CD4-positive, alpha-beta T cell (primary cell): ENCODE measurements at regions of chr22 and their contacts with region 1.

Region 1: DNA sequence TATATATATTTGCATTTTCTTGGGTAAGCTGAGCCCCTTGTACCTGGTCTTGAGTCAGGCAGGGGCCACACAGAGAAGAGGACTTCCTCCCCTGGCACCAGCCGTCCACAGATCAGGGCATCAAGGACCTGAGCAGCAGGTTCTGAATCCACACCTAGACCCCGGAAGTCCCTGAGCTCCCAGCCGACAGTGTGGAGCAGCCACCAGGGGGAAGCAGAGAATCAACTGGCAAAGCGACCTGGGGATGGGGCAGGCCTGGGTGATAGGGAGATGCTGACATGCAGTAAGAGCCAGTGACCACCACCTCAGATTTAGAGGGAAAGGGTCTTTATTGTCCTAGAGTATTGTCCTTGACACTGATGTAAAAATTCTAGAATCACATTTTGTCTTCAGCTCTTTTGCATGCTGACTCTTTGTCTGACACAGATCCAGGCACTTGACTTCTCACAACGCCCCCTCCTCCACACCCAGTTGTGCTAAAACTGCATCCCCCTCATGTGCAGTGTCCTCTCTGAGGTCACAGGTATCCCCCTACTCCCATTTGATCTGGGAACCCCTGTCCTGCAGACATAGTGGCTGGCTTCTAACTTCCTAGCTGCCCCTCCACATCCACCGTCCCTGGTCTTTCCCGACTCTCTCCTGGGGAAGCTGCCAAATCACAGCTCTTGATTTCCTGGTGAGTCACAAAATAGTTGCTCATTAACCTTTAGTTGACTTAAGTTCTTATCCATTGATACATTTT is 109.3 kb downstream of the GGTLC2 start:
- DNase-seq: peak; percentile 67 to 89 (median 75)
- ATAC-seq: peak; percentile 92
- H3K4me3 ChIP-seq: no peak overlapping the region
- H3K4me3 Mint-ChIP-seq: peak overlapping the region; percentile 62
- H3K27ac ChIP-seq: peak overlapping the region in 1 of 2 donors; percentile 46
- H3K27ac Mint-ChIP-seq: peak overlapping the region; percentile 91
- H3K4me1 ChIP-seq: peaks cover 55% of the 10 kb centered on the region
- H3K4me1 Mint-ChIP-seq: peaks cover 43% of the 10 kb centered on the region
- H3K27me3 ChIP-seq: no peaks in the 10 kb centered on the region
- H3K27me3 Mint-ChIP-seq: no peaks in the 10 kb centered on the region
- CTCF ChIP-seq: peak; percentile 77

Region 2: DNA sequence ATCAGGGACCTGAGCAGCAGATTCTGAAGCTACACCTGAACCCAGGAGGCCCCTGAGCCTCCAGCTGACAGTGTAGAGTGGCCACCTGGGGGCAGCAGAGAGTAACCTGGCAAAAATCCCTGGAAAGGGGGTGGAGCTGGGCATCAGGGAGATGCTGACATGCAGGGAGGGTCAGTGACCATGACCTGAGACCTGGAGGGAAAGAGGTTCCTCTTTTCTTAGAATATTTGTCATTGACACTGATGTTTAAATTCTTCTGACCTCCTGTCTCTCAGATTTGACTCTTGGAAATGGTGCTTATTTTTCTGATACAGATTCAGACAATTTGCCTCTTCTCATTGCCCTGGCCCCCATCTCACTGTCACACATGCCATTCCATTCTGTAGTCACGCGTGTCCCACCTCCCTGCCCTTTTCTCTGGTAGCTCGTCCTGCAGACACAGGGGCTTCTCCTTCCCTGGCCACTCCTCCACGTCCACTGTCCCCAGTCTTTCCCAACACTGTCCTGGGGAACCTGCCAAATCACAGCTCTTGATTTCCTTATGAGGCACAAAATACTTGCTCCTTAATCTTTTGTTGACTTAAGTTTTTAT is 16.7 kb after region 1 on chr22:
- CTCF ChIA-PET with region 1: interaction called, 14 read pairs
- POLR2A ChIA-PET with region 1: interaction called, 8 read pairs
- intact Hi-C with region 1: loop called in 1 of 2 experiments (anchors 2 kb)
- DNase-seq: peak in 12 of 14 experiments; percentile 19 to 69 (median 36)
- ATAC-seq: peak; percentile 54
- H3K4me3 ChIP-seq: no peak overlapping the region
- H3K4me3 Mint-ChIP-seq: no peak overlapping the region
- H3K27ac ChIP-seq: no peak overlapping the region
- H3K27ac Mint-ChIP-seq: no peak overlapping the region
- H3K4me1 ChIP-seq: peaks cover 21% of the 10 kb centered on the region
- H3K4me1 Mint-ChIP-seq: no peaks in the 10 kb centered on the region
- H3K27me3 ChIP-seq: no peaks in the 10 kb centered on the region
- H3K27me3 Mint-ChIP-seq: peaks cover 12% of the 10 kb centered on the region
- CTCF ChIP-seq: peak; percentile 75

Region 3: GRCh38 chr22:22802339-22802970 is 48.8 kb after region 1 on chr22:
- CTCF ChIA-PET with region 1: interaction called, 6 read pairs
- POLR2A ChIA-PET with region 1: interaction called, 9 read pairs
- intact Hi-C with region 1: loop called in 1 of 2 experiments (anchors 2 kb)
- DNase-seq: peak in 10 of 14 experiments; percentile 38 to 81 (median 57)
- ATAC-seq: peak; percentile 72
- H3K4me3 ChIP-seq: no peak overlapping the region
- H3K4me3 Mint-ChIP-seq: no peak overlapping the region
- H3K27ac ChIP-seq: no peak overlapping the region
- H3K27ac Mint-ChIP-seq: no peak overlapping the region
- H3K4me1 ChIP-seq: peaks cover 25% of the 10 kb centered on the region
- H3K4me1 Mint-ChIP-seq: peaks cover 55% of the 10 kb centered on the region
- H3K27me3 ChIP-seq: peaks cover 0 to 2% of the 10 kb centered on the region in 2 experiments
- H3K27me3 Mint-ChIP-seq: no peaks in the 10 kb centered on the region
- CTCF ChIP-seq: peak; percentile 83

Region 4: GRCh38 chr22:22870577-22871404 is 117.1 kb after region 1 on chr22:
- CTCF ChIA-PET with region 1: interaction called, 14 read pairs
- POLR2A ChIA-PET with region 1: interaction called, 3 read pairs
- intact Hi-C with region 1: no loop called
- DNase-seq: peak in 1 of 14 experiments; percentile 24
- ATAC-seq: no peak
- H3K4me3 ChIP-seq: no peak overlapping the region
- H3K4me3 Mint-ChIP-seq: no peak overlapping the region
- H3K27ac ChIP-seq: no peak overlapping the region
- H3K27ac Mint-ChIP-seq: no peak overlapping the region
- H3K4me1 ChIP-seq: peaks cover 13% of the 10 kb centered on the region
- H3K4me1 Mint-ChIP-seq: peaks cover 11% of the 10 kb centered on the region
- H3K27me3 ChIP-seq: no peaks in the 10 kb centered on the region
- H3K27me3 Mint-ChIP-seq: no peaks in the 10 kb centered on the region
- CTCF ChIP-seq: no peak

Region 5: GRCh38 chr22:22884010-22884887 is 130.6 kb after region 1 on chr22:
- CTCF ChIA-PET with region 1: interaction called, 21 read pairs
- POLR2A ChIA-PET with region 1: interaction called, 24 read pairs
- intact Hi-C with region 1: loop called (anchors 1 to 2 kb)
- DNase-seq: peak; percentile 43 to 87 (median 57)
- ATAC-seq: peak; percentile 90
- H3K4me3 ChIP-seq: no peak overlapping the region
- H3K4me3 Mint-ChIP-seq: no peak overlapping the region
- H3K27ac ChIP-seq: no peak overlapping the region
- H3K27ac Mint-ChIP-seq: no peak overlapping the region
- H3K4me1 ChIP-seq: peaks cover 5% of the 10 kb centered on the region
- H3K4me1 Mint-ChIP-seq: no peaks in the 10 kb centered on the region
- H3K27me3 ChIP-seq: peaks cover 0 to 4% of the 10 kb centered on the region in 2 experiments
- H3K27me3 Mint-ChIP-seq: no peaks in the 10 kb centered on the region
- CTCF ChIP-seq: peak; percentile 83